Activated naive CD4-positive, alpha-beta T cell treated with anti-CD3 and anti-CD28 coated beads for 36 hours (primary cell): ENCODE measurements at regions of chr5 and their contacts with region 1.

Region 1: DNA sequence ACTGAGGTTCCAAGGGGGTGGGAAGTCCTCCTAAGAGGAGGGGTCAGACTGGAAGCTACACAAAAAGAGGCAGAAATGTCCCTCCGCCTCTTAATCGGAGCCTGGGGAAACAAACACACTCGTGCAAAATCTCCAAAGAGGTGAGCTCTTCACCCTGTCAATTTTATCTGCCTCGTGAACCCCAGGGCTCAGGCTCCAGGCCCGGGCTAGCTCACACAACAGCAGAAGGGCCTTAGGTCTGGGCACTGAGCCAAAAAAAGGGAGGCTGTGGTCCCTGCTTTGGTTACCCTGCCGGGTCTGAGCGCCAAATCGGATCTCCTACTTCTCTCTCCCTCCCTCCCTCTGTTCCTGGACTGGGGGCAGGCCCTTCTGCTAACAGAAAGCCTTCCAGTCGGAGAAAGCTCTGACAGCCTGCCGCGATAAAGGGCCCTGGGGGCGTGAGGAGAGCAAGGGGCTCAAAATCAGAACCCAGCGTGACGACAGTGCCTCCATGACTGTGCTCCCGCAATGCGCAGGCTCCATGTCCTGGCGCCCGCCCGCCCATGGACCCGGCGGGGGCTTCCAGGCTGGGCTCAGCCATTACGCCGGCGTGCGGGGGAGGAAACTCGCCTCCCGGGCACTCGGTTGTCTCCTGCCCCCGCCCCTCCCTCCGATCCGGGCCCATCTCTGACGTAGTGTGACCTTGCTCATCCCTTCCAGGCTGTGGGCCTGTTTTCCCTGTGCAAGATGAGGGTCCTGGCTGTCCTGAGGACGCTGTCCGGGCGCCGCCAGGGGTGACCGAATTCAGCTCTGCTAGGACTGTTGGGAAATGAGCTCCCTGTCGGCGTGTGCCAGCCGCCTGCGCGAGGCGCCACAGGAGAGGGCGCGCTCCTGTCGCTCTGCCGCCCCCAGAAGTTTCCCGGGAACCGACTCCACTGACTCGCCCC is 865 bp upstream of the SLC22A4 start:
- DNase-seq: peak; percentile 92
- H3K4me3 Mint-ChIP-seq: peak overlapping the region; percentile 92
- H3K27ac Mint-ChIP-seq: peak overlapping the region; percentile 89
- H3K4me1 Mint-ChIP-seq: peaks cover 23% of the 10 kb centered on the region
- H3K27me3 Mint-ChIP-seq: peaks cover 14% of the 10 kb centered on the region

Region 2: GRCh38 chr5:132180134-132180745 is 113.1 kb before region 1 on chr5:
- CTCF ChIA-PET with region 1: no interaction called
- intact Hi-C with region 1: no loop called
- DNase-seq: peak; percentile 27
- H3K4me3 Mint-ChIP-seq: no peak overlapping the region
- H3K27ac Mint-ChIP-seq: no peak overlapping the region
- H3K4me1 Mint-ChIP-seq: peaks cover 24% of the 10 kb centered on the region
- H3K27me3 Mint-ChIP-seq: no peaks in the 10 kb centered on the region

Region 3: DNA sequence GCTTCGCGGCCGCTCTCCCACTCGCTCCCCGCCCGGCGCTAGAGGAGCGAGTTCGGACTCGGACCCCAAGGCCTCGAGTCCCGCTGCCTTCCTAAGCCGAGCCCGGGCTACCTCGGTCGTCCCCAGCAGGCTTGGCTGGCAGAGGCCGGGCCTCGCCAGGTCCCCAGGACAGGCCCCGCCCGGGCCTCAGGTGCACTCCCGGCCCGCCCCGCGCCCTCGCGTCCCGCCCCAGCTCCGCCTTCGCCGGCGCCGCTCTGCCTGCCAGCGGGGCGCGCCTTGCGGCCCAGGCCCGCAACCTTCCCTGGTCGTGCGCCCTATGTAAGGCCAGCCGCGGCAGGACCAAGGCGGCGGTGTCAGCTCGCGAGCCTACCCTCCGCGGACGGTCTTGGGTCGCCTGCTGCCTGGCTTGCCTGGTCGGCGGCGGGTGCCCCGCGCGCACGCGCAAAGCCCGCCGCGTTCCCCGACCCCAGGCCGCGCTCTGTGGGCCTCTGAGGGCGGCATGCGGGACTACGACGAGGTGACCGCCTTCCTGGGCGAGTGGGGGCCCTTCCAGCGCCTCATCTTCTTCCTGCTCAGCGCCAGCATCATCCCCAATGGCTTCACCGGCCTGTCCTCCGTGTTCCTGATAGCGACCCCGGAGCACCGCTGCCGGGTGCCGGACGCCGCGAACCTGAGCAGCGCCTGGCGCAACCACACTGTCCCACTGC is 76.3 kb after region 1 on chr5 and contains the start of gene SLC22A5:
- CTCF ChIA-PET with region 1: interaction called, 6 read pairs
- intact Hi-C with region 1: loop called (anchors 1 kb)
- DNase-seq: peak; percentile 72
- H3K4me3 Mint-ChIP-seq: peak within 1 kb of the TSS; percentile 77
- H3K27ac Mint-ChIP-seq: peak within 1 kb of the TSS; percentile 68
- H3K4me1 Mint-ChIP-seq: peaks cover 22% of the 10 kb centered on the region
- H3K27me3 Mint-ChIP-seq: no peaks in the 10 kb centered on the region
- total RNA-seq, gene SLC22A5: 3.1 to 3.6 TPM

Region 4: DNA sequence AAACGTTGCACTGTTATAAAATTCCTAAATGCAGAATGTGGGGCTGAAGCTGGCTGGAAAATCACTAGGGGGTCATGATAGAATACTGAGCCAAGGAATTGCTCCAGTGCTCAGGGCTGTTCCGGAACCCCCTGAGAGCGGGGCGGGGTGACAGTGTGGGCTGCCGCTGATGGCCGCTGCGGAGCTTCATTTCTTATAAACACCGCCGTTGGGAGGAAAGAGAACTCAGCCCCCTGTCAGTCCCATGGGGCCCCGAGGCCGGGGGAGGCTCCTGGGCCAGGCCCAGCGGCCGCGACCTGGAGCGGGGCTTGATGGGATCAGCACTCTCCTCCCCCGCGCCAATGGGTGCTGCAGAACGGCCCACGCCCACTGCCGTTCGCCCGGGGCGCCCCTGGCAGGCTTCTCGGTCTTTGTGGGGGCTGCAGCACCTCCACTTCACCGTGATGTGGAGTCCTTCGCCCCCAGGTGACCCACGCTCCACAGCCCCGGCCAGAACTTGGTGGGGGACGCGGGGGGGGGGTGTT is 202.4 kb after region 1 on chr5:
- CTCF ChIA-PET with region 1: interaction called, 4 read pairs
- intact Hi-C with region 1: loop called (anchors 1 kb)
- DNase-seq: peak; percentile 79
- H3K4me3 Mint-ChIP-seq: peak overlapping the region; percentile 84
- H3K27ac Mint-ChIP-seq: peak overlapping the region; percentile 91
- H3K4me1 Mint-ChIP-seq: peaks cover 56% of the 10 kb centered on the region
- H3K27me3 Mint-ChIP-seq: no peaks in the 10 kb centered on the region

Region 5: GRCh38 chr5:132688536-132689339 is 395.4 kb after region 1 on chr5:
- CTCF ChIA-PET with region 1: no interaction called
- intact Hi-C with region 1: loop called (anchors 5 kb)
- DNase-seq: peak; percentile 69
- H3K4me3 Mint-ChIP-seq: no peak overlapping the region
- H3K27ac Mint-ChIP-seq: peak overlapping the region; percentile 17
- H3K4me1 Mint-ChIP-seq: peaks cover 27% of the 10 kb centered on the region
- H3K27me3 Mint-ChIP-seq: no peaks in the 10 kb centered on the region

Region 6: DNA sequence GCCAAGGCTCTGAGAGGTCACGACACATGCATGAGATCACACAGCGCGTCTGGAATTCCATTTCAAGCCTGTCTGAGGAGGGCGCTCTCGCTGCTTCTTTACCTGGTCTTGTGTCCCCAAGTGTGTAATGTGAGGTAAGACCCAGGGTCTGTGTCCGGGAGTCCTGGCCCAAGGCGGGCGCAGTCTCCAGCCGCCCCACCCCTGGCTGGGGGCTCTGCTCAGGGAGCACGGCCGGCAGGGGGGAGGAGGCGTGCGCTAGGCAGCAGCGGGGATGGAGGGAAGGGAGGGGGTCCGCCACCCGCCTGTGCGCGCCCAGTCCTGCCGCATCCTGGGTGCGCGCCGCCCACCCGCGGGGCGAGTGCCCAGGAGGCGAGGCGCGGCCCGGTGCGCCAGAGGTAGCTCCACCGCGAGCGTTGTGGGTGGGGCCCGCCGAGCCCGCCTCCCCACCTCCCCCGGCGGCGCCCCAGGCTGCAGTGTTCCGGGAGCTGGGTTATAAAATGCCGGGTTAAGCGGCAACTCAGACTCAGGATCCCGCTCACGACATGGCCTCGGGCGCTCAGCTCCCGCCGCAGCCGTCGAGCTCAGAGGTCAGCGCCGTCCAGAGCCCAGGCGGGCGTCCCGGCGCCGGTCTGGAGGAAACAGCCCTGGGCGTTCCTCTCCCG is 453.8 kb after region 1 on chr5 and contains the start of gene CCNI2:
- CTCF ChIA-PET with region 1: no interaction called
- intact Hi-C with region 1: loop called (anchors 1 kb)
- DNase-seq: peak; percentile 80
- H3K4me3 Mint-ChIP-seq: peak within 1 kb of the TSS; percentile 71
- H3K27ac Mint-ChIP-seq: no peak within 1 kb of the TSS
- H3K4me1 Mint-ChIP-seq: peaks cover 22% of the 10 kb centered on the region
- H3K27me3 Mint-ChIP-seq: no peaks in the 10 kb centered on the region
- total RNA-seq, gene CCNI2: 1.4 to 2.5 TPM

Region 7: GRCh38 chr5:132866342-132867045 is 573.2 kb after region 1 on chr5 and contains the starts of genes GDF9 and UQCRQ:
- CTCF ChIA-PET with region 1: no interaction called
- intact Hi-C with region 1: loop called (anchors 1 kb)
- DNase-seq: peak; percentile 96
- H3K4me3 Mint-ChIP-seq: peak within 1 kb of the TSS; percentile 99
- H3K27ac Mint-ChIP-seq: peak within 1 kb of the TSS; percentile 97
- H3K4me1 Mint-ChIP-seq: peaks cover 27% of the 10 kb centered on the region
- H3K27me3 Mint-ChIP-seq: no peaks in the 10 kb centered on the region
- total RNA-seq, gene GDF9: 0.64 to 1.2 TPM
- total RNA-seq, gene UQCRQ: 677 to 784 TPM